ENCODE measurements at regions of chr3 and their contacts with region 1.

Region 1: DNA sequence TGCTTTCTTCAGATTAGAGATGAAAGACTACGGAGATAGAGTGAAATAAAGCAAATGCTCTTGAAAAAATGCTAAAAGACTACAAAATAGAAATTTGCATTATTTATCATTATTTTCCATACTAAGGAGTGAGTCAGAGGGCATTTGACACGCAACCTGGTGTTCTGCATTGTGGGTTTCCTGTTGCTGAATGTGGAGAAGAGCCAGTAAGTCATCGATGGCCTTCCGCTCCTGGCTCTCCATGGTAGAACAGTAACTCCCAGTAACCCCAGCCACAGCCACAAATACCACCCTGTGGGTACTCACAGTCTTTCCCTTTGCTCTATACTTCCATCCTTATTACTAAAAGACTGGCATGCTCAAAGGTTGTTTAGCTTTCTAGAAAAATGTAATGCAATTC is 61.5 kb downstream of the CGGBP1 start:
- DNase-seq: peak; percentile 75
- H3K4me3 Mint-ChIP-seq: peak overlapping the region; percentile 22
- H3K27ac Mint-ChIP-seq: no peak overlapping the region
- H3K4me1 Mint-ChIP-seq: peaks cover 16% of the 10 kb centered on the region
- H3K27me3 Mint-ChIP-seq: peaks cover 2% of the 10 kb centered on the region

Region 2: GRCh38 chr3:87792534-87793336 is 204.6 kb before region 1 on chr3:
- CTCF ChIA-PET with region 1: no interaction called
- POLR2A ChIA-PET with region 1: no interaction called
- intact Hi-C with region 1: loop called (anchors 10 kb)
- DNase-seq: no peak
- H3K4me3 Mint-ChIP-seq: peak within 1 kb of the TSS; percentile 50
- H3K27ac Mint-ChIP-seq: no peak within 1 kb of the TSS
- H3K4me1 Mint-ChIP-seq: peaks cover 27% of the 10 kb centered on the region
- H3K27me3 Mint-ChIP-seq: peaks cover 55% of the 10 kb centered on the region

Region 3: GRCh38 chr3:88412346-88412745 is 415.0 kb after region 1 on chr3:
- CTCF ChIA-PET with region 1: no interaction called
- POLR2A ChIA-PET with region 1: no interaction called
- intact Hi-C with region 1: no loop called
- DNase-seq: no peak
- H3K4me3 Mint-ChIP-seq: no peak overlapping the region
- H3K27ac Mint-ChIP-seq: no peak overlapping the region
- H3K4me1 Mint-ChIP-seq: peaks cover 8% of the 10 kb centered on the region
- H3K27me3 Mint-ChIP-seq: no peaks in the 10 kb centered on the region

Measured in activated CD4-positive, alpha-beta memory T cell treated with anti-CD3 and anti-CD28 coated beads for 36 hours (primary cell).